ENCODE measurements at regions of chr1 and their contacts with region 1.

Region 1: GRCh38 chr1:55483523-55483922 is 268.4 kb upstream of the USP24 start:
- DNase-seq: peak; percentile 16 to 22 (median 18)
- ATAC-seq: peak; percentile 93
- H3K4me3 ChIP-seq: no peak overlapping the region
- H3K27ac ChIP-seq: no peak overlapping the region
- H3K4me1 ChIP-seq: no peaks in the 10 kb centered on the region
- H3K27me3 ChIP-seq: no peaks in the 10 kb centered on the region
- CTCF ChIP-seq: peak; percentile 22 to 74 (median 40); a peak in 5 of 6 replicates
- EP300 ChIP-seq: no peak
- POLR2A ChIP-seq: no peak
- RAD21 ChIP-seq: peak; percentile 72 to 77

Region 2: GRCh38 chr1:55007625-55008024 is 475.9 kb before region 1 on chr1:
- CTCF ChIA-PET with region 1: no interaction called
- POLR2A ChIA-PET with region 1: no interaction called
- in situ Hi-C with region 1: no loop called
- intact Hi-C with region 1: no loop called
- DNase-seq: no peak
- ATAC-seq: no peak
- H3K4me3 ChIP-seq: no peak overlapping the region
- H3K27ac ChIP-seq: no peak overlapping the region
- H3K4me1 ChIP-seq: no peaks in the 10 kb centered on the region
- H3K27me3 ChIP-seq: peaks cover 5 to 25% of the 10 kb centered on the region in 2 experiments; a peak in 3 of 5 replicates
- CTCF ChIP-seq: no peak
- EP300 ChIP-seq: no peak
- POLR2A ChIP-seq: no peak
- RAD21 ChIP-seq: no peak

Region 3: GRCh38 chr1:55428944-55429931 is 54.3 kb before region 1 on chr1:
- CTCF ChIA-PET with region 1: no interaction called
- POLR2A ChIA-PET with region 1: no interaction called
- in situ Hi-C with region 1: loop called (anchors 5 kb)
- intact Hi-C with region 1: no loop called
- DNase-seq: peak in 2 of 4 experiments; percentile 17 to 27
- ATAC-seq: peak; percentile 57
- H3K4me3 ChIP-seq: no peak overlapping the region
- H3K27ac ChIP-seq: no peak overlapping the region
- H3K4me1 ChIP-seq: peaks cover 0 to 12% of the 10 kb centered on the region in 2 experiments; a peak in 4 of 5 replicates
- H3K27me3 ChIP-seq: no peaks in the 10 kb centered on the region
- CTCF ChIP-seq: no peak
- EP300 ChIP-seq: no peak
- POLR2A ChIP-seq: no peak
- RAD21 ChIP-seq: no peak

Region 4: GRCh38 chr1:55443175-55443915 is 40.2 kb before region 1 on chr1:
- CTCF ChIA-PET with region 1: no interaction called
- POLR2A ChIA-PET with region 1: interaction called, 5 read pairs
- in situ Hi-C with region 1: no loop called
- intact Hi-C with region 1: loop called (anchors 2 kb)
- DNase-seq: peak in 1 of 4 experiments; percentile 40
- ATAC-seq: peak; percentile 91
- H3K4me3 ChIP-seq: no peak overlapping the region
- H3K27ac ChIP-seq: no peak overlapping the region; the same call in 2 of the 3 replicates
- H3K4me1 ChIP-seq: peaks cover 0 to 14% of the 10 kb centered on the region in 2 experiments; a peak in 3 of 5 replicates
- H3K27me3 ChIP-seq: no peaks in the 10 kb centered on the region
- CTCF ChIP-seq: peak in 1 of 3 experiments; percentile 27; a peak in 1 of 6 replicates
- EP300 ChIP-seq: no peak
- POLR2A ChIP-seq: no peak
- RAD21 ChIP-seq: peak in 1 of 2 experiments; percentile 48; a peak in 3 of 4 replicates

Region 5: DNA sequence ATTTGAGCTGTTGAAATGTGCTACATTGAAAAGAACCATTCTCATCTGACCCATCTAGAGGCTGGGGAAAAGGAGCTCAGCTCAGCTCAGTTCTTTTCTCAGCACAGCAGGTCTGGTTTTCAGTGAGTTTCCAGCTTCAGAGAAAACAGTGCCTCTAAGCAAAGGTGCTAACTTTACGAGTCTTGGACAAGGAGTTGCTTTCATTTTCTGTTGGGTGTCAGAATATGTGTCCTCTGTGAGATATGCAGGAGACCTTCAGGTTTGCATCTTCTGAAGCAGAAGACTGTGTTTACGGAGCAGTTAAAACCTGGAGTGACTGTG is 53.0 kb after region 1 on chr1:
- CTCF ChIA-PET with region 1: no interaction called
- POLR2A ChIA-PET with region 1: no interaction called
- in situ Hi-C with region 1: no loop called
- intact Hi-C with region 1: no loop called
- DNase-seq: no peak
- ATAC-seq: no peak
- H3K4me3 ChIP-seq: no peak overlapping the region
- H3K27ac ChIP-seq: no peak overlapping the region
- H3K4me1 ChIP-seq: no peaks in the 10 kb centered on the region
- H3K27me3 ChIP-seq: no peaks in the 10 kb centered on the region
- CTCF ChIP-seq: no peak
- EP300 ChIP-seq: no peak
- POLR2A ChIP-seq: no peak
- RAD21 ChIP-seq: no peak